ENCODE measurements at regions of chr22 and their contacts with region 1.

Region 1: DNA sequence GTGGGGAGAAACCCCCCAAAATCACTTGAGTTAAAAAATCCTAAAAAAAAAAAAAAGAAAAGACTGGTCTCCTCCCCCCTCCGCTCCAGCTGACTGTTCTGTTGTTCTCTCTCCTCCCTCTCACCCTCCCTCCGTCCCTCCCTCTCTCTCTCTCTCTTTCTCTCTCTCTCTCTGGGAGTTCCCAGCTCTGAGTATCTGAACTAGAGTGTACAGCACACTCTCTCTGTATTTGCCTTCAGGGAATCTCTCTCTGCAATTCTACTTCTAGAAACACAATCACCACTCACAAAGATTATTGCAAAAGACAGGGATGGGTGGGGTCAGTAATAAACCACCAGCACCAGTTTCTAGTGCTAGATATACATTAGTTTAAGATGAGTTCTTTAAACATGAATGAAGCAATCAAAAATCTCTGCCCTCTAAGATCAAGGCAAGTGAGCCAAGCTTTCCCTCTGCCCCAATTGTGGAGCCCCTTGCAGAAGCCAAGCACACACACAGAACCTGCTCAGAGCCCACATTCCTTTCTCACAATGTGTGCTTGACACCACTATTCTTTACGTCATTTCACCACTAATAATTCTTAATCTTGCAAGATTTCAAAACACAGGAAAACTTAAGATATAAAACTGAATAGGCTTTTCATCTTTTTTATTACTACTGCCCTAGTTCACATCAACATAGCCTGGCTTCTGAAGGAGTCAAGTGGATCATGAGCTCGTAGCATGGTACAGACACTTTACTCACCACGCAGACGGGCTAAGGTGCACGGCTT is 133.5 kb downstream of the RBFOX2 start:
- DNase-seq: peak; percentile 99
- H3K4me3 ChIP-seq: peak overlapping the region; percentile 49 to 59 (median 54)
- H3K27ac ChIP-seq: peak overlapping the region; percentile 96
- H3K4me1 ChIP-seq: peaks cover 61% of the 10 kb centered on the region
- H3K27me3 ChIP-seq: no peaks in the 10 kb centered on the region
- CTCF ChIP-seq: no peak

Region 2: GRCh38 chr22:35648066-35649025 is 246.8 kb before region 1 on chr22 and contains the start of gene APOL6:
- CTCF ChIA-PET with region 1: no interaction called
- dilution Hi-C with region 1: no loop called
- in situ Hi-C with region 1: loop called in 1 of 2 experiments (anchors 25 kb)
- intact Hi-C with region 1: loop called (anchors 1 kb)
- DNase-seq: peak; percentile 77
- H3K4me3 ChIP-seq: peak within 1 kb of the TSS; percentile 55 to 60 (median 58)
- H3K27ac ChIP-seq: peak within 1 kb of the TSS; percentile 87
- H3K4me1 ChIP-seq: peaks cover 25% of the 10 kb centered on the region
- H3K27me3 ChIP-seq: no peaks in the 10 kb centered on the region
- CTCF ChIP-seq: no peak
- total RNA-seq, gene APOL6: 10.6 to 21.5 TPM

Region 3: DNA sequence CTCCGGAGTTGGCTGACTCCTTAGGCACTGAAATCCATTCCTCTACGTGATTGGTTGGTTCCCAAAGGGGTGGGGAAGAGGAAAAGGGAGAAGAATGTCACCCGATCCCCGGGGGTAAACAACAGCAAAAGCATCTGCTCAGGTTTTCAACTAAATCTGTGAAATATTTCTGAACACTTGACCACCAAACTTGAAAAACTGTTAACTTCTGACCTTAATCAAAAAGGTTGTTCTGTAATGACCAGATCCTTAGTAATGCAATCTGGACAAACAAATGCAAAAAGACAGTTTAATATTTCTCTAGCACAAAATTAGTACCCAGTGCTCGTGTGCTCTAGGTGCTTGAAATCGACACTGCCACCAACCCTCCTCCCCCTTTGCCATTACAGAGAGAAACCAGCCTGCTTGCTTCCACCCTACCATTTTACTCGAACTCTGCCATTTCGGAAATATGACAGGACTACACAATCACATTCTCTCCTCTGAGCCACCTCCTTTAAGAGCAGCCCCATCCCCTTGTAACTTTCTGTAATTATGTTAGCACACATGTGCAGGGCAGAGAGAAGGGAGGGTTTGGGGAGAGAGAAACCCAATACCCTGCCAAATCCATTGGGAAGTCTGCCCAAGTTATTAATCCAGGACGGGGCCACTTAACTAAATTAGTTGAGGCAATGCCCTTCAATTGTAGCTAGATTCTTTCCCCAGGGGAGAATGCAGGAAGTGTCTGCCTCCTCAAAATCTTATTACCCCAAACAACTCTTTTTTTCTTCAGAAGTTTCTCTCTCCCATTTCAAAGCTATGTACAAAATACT is 19.7 kb after region 1 on chr22:
- CTCF ChIA-PET with region 1: no interaction called
- dilution Hi-C with region 1: no loop called
- in situ Hi-C with region 1: no loop called
- intact Hi-C with region 1: loop called (anchors 1 kb)
- DNase-seq: peak; percentile 91
- H3K4me3 ChIP-seq: peak overlapping the region; percentile 38 to 49 (median 41)
- H3K27ac ChIP-seq: peak overlapping the region; percentile 74
- H3K4me1 ChIP-seq: peaks cover 52% of the 10 kb centered on the region
- H3K27me3 ChIP-seq: no peaks in the 10 kb centered on the region
- CTCF ChIP-seq: no peak

Measured in mammary epithelial cell (primary cell).